ENCODE measurements at regions of chr9 and their contacts with region 1.

Region 1: DNA sequence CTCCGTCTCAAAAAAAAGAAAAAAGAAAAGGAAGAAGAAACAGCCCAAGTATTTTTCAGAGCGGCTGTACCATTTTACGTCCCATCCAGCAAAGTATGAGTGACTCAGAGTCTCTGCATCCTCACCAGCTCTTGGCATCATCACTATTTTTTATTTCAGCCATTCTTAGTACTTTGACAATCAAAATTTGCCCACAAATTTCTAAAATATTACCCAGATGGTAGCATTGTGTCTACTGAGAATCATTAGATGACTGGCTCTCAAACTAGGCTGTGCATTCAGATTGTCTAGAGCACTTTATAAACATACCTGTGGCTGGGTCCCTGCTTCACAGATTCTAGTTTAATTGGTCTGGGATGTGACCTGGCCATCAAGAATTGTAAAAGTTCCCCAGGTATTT is 21.6 kb upstream of the MELK start:
- DNase-seq: no peak
- ATAC-seq: no peak
- H3K4me3 ChIP-seq: no peak overlapping the region
- H3K27ac ChIP-seq: no peak overlapping the region
- H3K4me1 ChIP-seq: no peaks in the 10 kb centered on the region
- H3K27me3 ChIP-seq: peaks cover 0 to 5% (median 0%) of the 10 kb centered on the region in 7 donors
- CTCF ChIP-seq: no peak

Region 2: GRCh38 chr9:36423206-36423605 is 127.9 kb before region 1 on chr9:
- intact Hi-C with region 1: loop called in 1 of 10 experiments (anchors 5 kb)
- DNase-seq: no peak
- ATAC-seq: no peak
- H3K4me3 ChIP-seq: no peak overlapping the region
- H3K27ac ChIP-seq: no peak overlapping the region
- H3K4me1 ChIP-seq: peaks cover 0 to 13% (median 4%) of the 10 kb centered on the region in 9 donors
- H3K27me3 ChIP-seq: no peaks in the 10 kb centered on the region
- CTCF ChIP-seq: no peak

Region 3: DNA sequence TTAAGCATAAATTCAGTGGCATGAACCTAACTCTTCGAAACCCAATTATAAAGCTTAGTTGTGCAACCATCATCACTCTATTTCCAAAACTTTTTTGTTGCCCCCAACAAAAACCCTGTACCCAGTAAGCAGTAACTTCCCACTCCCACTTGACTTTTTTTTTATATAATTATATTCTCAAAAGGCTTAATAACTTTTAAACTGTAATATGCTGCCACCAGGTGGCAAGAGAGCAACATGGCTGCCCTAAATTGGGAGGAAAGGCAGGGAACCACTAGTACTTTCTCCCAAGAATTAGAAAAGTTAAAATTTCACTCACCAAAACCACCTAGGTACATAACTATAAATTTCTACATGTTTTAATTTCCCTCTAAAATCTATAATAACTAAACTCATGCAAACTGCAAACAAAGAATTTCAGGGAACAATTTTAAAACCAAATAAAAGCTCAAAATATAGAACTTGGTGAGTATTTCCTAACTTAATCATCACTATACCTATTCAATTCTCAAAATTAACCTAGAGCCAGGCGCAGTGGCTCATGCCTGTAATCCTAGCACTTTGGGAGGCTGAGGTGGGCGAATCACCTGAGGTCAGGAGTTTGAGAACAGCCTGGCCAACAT is 100.9 kb before region 1 on chr9:
- intact Hi-C with region 1: loop called in 3 of 10 experiments (anchors 10 kb)
- DNase-seq: peak in 1 of 2 donors; percentile 18
- ATAC-seq: peak in 3 of 8 donors; percentile 43 to 51 (median 45)
- H3K4me3 ChIP-seq: no peak overlapping the region
- H3K27ac ChIP-seq: no peak overlapping the region
- H3K4me1 ChIP-seq: peaks cover 0 to 37% (median 9%) of the 10 kb centered on the region in 9 donors
- H3K27me3 ChIP-seq: no peaks in the 10 kb centered on the region
- CTCF ChIP-seq: peak; percentile 50 to 80 (median 71)

Region 4: DNA sequence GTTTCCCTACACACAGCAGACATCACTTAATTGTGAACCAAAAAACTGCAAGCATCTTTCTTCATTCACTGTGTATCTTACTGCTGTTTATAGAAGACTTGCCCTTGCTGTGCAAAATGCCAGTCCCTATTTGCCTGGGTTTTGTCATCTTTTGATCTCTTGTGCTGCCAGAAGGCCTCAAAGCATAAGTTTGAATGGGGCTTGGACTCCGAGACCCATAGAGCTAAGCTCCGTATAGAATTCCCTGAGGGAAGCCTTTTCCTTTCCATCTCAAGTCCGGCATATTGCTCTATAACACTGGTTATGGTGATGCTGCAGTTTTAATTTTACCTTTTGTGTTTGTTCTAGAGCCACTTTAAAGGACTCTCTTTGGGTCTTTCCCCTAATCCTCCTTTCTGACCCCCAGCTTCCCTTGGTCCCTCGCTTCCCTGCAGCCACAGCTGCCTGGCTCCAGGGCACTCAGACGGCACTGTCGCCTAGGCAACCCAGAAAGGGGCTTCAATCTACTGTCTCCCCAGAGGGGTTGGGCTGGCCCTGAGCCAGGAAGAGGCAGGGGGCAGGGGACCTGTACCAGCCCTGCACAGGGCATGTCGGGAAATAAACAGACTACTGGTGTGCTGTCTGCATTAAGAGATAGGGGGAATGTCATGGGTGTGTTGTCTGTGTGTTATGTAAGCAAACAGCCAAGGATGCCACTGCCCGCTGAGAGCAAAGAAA is 51.8 kb before region 1 on chr9:
- intact Hi-C with region 1: loop called in 1 of 10 experiments (anchors 5 kb)
- DNase-seq: no peak
- ATAC-seq: no peak
- H3K4me3 ChIP-seq: no peak overlapping the region
- H3K27ac ChIP-seq: no peak overlapping the region
- H3K4me1 ChIP-seq: peaks cover 0 to 8% (median 0%) of the 10 kb centered on the region in 9 donors
- H3K27me3 ChIP-seq: no peaks in the 10 kb centered on the region
- CTCF ChIP-seq: no peak

Measured in heart right ventricle (tissue), 16 donors.